Adrenal gland (tissue), 19 donors: ENCODE measurements at regions of chr18 and their contacts with region 1.

Region 1: GRCh38 chr18:50009773-50010335 is 185.1 kb downstream of the MYO5B start:
- DNase-seq: peak; percentile 26 to 67 (median 53)
- H3K4me3 ChIP-seq: no peak overlapping the region
- H3K27ac ChIP-seq: no peak overlapping the region
- H3K4me1 ChIP-seq: no peaks in the 10 kb centered on the region
- H3K27me3 ChIP-seq: no peaks in the 10 kb centered on the region
- CTCF ChIP-seq: peak; percentile 36 to 58 (median 52)
- POLR2A ChIP-seq: no peak

Region 2: GRCh38 chr18:50075772-50076171 is 65.9 kb after region 1 on chr18:
- intact Hi-C with region 1: no loop called
- DNase-seq: no peak
- H3K4me3 ChIP-seq: no peak overlapping the region
- H3K27ac ChIP-seq: no peak overlapping the region
- H3K4me1 ChIP-seq: no peaks in the 10 kb centered on the region
- H3K27me3 ChIP-seq: no peaks in the 10 kb centered on the region
- CTCF ChIP-seq: no peak
- POLR2A ChIP-seq: no peak

Region 3: GRCh38 chr18:50194631-50195532 is 185.0 kb after region 1 on chr18 and contains the start of gene MYO5B:
- intact Hi-C with region 1: loop called in 1 of 2 experiments (anchors 10 kb)
- DNase-seq: peak in 6 of 7 donors; percentile 34 to 55 (median 46)
- H3K4me3 ChIP-seq: peak within 1 kb of the TSS in 2 of 4 donors; percentile 34 to 67
- H3K27ac ChIP-seq: no peak within 1 kb of the TSS
- H3K4me1 ChIP-seq: peaks cover 10 to 13% of the 10 kb centered on the region in 2 donors
- H3K27me3 ChIP-seq: peaks cover 16% of the 10 kb centered on the region
- CTCF ChIP-seq: peak in 3 of 6 experiments; percentile 48 to 62 (median 55)
- POLR2A ChIP-seq: no peak
- total RNA-seq, gene MYO5B: 0.61 to 9.3 (median 3.7) TPM

Region 4: GRCh38 chr18:50432915-50433314 is 423.1 kb after region 1 on chr18:
- intact Hi-C with region 1: no loop called
- DNase-seq: no peak
- H3K4me3 ChIP-seq: no peak overlapping the region
- H3K27ac ChIP-seq: no peak overlapping the region
- H3K4me1 ChIP-seq: peaks cover 0 to 3% of the 10 kb centered on the region in 2 donors
- H3K27me3 ChIP-seq: no peaks in the 10 kb centered on the region
- CTCF ChIP-seq: no peak
- POLR2A ChIP-seq: no peak